ENCODE measurements at regions of chr7 and their contacts with region 1.

Region 1: GRCh38 chr7:1579481-1580421 is 9.9 kb upstream of the PSMG3 start:
- DNase-seq: peak; percentile 50
- H3K4me3 ChIP-seq: no peak overlapping the region
- H3K27ac ChIP-seq: no peak overlapping the region
- H3K4me1 ChIP-seq: no peaks in the 10 kb centered on the region
- H3K27me3 ChIP-seq: no peaks in the 10 kb centered on the region
- CTCF ChIP-seq: peak; percentile 67 to 93
- POLR2A ChIP-seq: no peak

Region 2: GRCh38 chr7:1593091-1593866 is 13.5 kb after region 1 on chr7:
- CTCF ChIA-PET with region 1: interaction called, 8 read pairs
- POLR2A ChIA-PET with region 1: no interaction called
- dilution Hi-C with region 1: no loop called
- intact Hi-C with region 1: loop called (anchors 1 kb)
- DNase-seq: no peak
- H3K4me3 ChIP-seq: no peak overlapping the region
- H3K27ac ChIP-seq: no peak overlapping the region
- H3K4me1 ChIP-seq: no peaks in the 10 kb centered on the region
- H3K27me3 ChIP-seq: peaks cover 13 to 14% of the 10 kb centered on the region in 2 experiments
- CTCF ChIP-seq: peak; percentile 31 to 60
- POLR2A ChIP-seq: no peak

Region 3: GRCh38 chr7:1758028-1758858 is 178.5 kb after region 1 on chr7:
- CTCF ChIA-PET with region 1: interaction called, 6 read pairs
- POLR2A ChIA-PET with region 1: no interaction called
- dilution Hi-C with region 1: no loop called
- intact Hi-C with region 1: loop called (anchors 5 kb)
- DNase-seq: no peak
- H3K4me3 ChIP-seq: no peak overlapping the region
- H3K27ac ChIP-seq: no peak overlapping the region
- H3K4me1 ChIP-seq: no peaks in the 10 kb centered on the region
- H3K27me3 ChIP-seq: peaks cover 0 to 1% of the 10 kb centered on the region in 2 experiments
- CTCF ChIP-seq: peak in 1 of 2 donors; percentile 36
- POLR2A ChIP-seq: no peak

Measured in endothelial cell of umbilical vein (primary cell).